ENCODE measurements at regions of chr2 and their contacts with region 1.

Region 1: GRCh38 chr2:158006961-158007719 is 94.5 kb upstream of the UPP2 start:
- DNase-seq: no peak
- H3K4me3 Mint-ChIP-seq: no peak overlapping the region
- H3K27ac Mint-ChIP-seq: no peak overlapping the region
- H3K4me1 Mint-ChIP-seq: peaks cover 29% of the 10 kb centered on the region
- H3K27me3 Mint-ChIP-seq: no peaks in the 10 kb centered on the region

Region 2: DNA sequence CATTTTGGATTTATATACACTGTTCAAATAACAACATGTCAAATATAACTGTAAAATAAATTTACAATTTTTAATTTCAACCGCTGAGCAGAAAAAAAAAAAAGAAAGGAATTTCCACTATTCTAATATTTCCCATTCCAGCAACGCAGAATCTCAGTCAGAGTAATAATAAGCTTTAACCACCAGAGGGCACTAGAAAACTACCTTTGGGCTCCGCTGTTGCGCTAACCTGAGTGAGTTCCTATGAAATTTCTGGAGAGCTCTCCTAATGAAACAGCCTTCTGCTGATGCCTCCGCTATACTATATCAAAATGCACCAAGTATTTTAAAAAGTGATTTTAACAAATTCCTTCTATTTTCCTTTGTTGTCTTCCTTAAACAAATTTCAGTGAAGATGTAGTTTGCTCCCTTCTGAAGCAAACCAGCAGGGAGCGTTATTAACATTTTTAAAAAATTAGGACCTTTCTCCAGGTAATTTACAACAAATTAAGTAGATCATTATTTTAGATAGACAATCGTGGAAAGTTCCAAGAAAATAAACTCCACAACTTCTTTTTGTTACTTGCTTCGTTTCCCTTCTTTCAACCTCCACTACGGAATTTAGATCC is 704.5 kb before region 1 on chr2:
- intact Hi-C with region 1: loop called (anchors 1 kb)
- DNase-seq: peak; percentile 26
- H3K4me3 Mint-ChIP-seq: no peak overlapping the region
- H3K27ac Mint-ChIP-seq: no peak overlapping the region
- H3K4me1 Mint-ChIP-seq: peaks cover 22% of the 10 kb centered on the region
- H3K27me3 Mint-ChIP-seq: peaks cover 14% of the 10 kb centered on the region

Region 3: GRCh38 chr2:157492189-157492773 is 514.9 kb before region 1 on chr2:
- intact Hi-C with region 1: loop called (anchors 1 kb)
- DNase-seq: peak; percentile 63
- H3K4me3 Mint-ChIP-seq: no peak overlapping the region
- H3K27ac Mint-ChIP-seq: no peak overlapping the region
- H3K4me1 Mint-ChIP-seq: peaks cover 71% of the 10 kb centered on the region
- H3K27me3 Mint-ChIP-seq: no peaks in the 10 kb centered on the region

Region 4: GRCh38 chr2:157596992-157597681 is 410.0 kb before region 1 on chr2:
- intact Hi-C with region 1: loop called (anchors 5 kb)
- DNase-seq: peak; percentile 47
- H3K4me3 Mint-ChIP-seq: peak overlapping the region; percentile 63
- H3K27ac Mint-ChIP-seq: no peak overlapping the region
- H3K4me1 Mint-ChIP-seq: peaks cover 7% of the 10 kb centered on the region
- H3K27me3 Mint-ChIP-seq: peaks cover 39% of the 10 kb centered on the region

Region 5: DNA sequence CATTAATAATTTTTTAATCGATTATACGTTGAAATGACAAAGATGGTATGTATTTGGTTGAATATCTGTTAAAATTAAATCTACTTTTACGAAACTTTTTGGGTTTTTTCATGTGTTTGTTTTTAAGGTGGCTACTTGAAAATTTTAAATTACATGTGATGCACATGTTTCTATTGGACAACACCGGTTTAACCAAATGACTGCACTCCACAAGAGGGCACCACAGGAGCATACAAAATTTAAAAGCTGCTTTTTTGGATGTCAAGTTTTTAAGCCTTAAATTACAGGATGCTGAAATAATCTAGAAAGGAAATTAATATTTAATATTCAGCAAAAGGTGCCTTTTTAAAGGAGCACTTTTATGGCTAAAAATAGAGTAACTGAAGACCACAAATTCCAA is 229.7 kb before region 1 on chr2:
- intact Hi-C with region 1: loop called (anchors 1 kb)
- DNase-seq: peak; percentile 19
- H3K4me3 Mint-ChIP-seq: no peak overlapping the region
- H3K27ac Mint-ChIP-seq: no peak overlapping the region
- H3K4me1 Mint-ChIP-seq: peaks cover 30% of the 10 kb centered on the region
- H3K27me3 Mint-ChIP-seq: no peaks in the 10 kb centered on the region

Region 6: GRCh38 chr2:157876066-157876787 is 130.9 kb before region 1 on chr2 and contains the start of gene ACVR1:
- intact Hi-C with region 1: loop called (anchors 1 kb)
- DNase-seq: peak; percentile 80
- H3K4me3 Mint-ChIP-seq: peak within 1 kb of the TSS; percentile 98
- H3K27ac Mint-ChIP-seq: peak within 1 kb of the TSS; percentile 96
- H3K4me1 Mint-ChIP-seq: peaks cover 65% of the 10 kb centered on the region
- H3K27me3 Mint-ChIP-seq: no peaks in the 10 kb centered on the region
- total RNA-seq, gene ACVR1: 44.0 and 46.5 TPM in 2 replicates